ENCODE measurements at regions of chr2 and their contacts with region 1.

Region 1: DNA sequence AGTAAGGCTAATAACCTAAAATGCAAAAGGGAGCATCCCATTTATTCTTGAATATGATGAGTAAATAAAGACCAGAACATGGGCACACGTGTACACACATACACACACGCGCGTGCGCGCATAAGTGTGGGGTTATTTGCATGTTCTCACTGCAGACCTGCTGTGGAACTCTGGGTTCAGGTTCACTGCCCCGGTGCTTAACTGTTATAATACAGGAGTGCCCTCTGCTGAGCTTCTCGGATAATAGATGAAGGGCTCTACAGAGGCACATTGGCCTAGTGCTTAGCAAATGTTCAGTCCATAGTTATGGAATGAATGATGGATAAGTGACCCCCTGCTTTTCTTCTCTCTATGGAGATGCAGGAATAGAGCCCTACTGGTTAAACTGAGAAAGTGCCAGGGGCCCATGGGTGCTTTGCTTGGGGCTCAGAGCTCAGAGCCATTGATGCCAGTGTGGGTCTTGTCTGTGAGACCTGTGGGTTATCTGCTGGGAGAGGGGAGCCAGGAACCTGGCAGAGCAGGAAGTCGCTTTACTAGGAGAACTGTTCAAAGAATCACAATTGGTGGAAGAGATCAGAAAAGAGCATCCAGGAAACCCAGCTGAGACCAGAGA is 3.6 kb upstream of the ARL4C start:
- DNase-seq: peak; percentile 92
- ATAC-seq: peak; percentile 66
- H3K4me3 ChIP-seq: no peak overlapping the region
- H3K4me3 Mint-ChIP-seq: peak overlapping the region; percentile 49
- H3K27ac ChIP-seq: no peak overlapping the region
- H3K27ac Mint-ChIP-seq: peak overlapping the region; percentile 72
- H3K4me1 ChIP-seq: peaks cover 5 to 8% of the 10 kb centered on the region in 2 donors
- H3K4me1 Mint-ChIP-seq: peaks cover 27% of the 10 kb centered on the region
- H3K27me3 ChIP-seq: peaks cover 0 to 14% (median 7%) of the 10 kb centered on the region in 4 experiments
- H3K27me3 Mint-ChIP-seq: peaks cover 28% of the 10 kb centered on the region
- CTCF ChIP-seq: peak; percentile 78

Region 2: DNA sequence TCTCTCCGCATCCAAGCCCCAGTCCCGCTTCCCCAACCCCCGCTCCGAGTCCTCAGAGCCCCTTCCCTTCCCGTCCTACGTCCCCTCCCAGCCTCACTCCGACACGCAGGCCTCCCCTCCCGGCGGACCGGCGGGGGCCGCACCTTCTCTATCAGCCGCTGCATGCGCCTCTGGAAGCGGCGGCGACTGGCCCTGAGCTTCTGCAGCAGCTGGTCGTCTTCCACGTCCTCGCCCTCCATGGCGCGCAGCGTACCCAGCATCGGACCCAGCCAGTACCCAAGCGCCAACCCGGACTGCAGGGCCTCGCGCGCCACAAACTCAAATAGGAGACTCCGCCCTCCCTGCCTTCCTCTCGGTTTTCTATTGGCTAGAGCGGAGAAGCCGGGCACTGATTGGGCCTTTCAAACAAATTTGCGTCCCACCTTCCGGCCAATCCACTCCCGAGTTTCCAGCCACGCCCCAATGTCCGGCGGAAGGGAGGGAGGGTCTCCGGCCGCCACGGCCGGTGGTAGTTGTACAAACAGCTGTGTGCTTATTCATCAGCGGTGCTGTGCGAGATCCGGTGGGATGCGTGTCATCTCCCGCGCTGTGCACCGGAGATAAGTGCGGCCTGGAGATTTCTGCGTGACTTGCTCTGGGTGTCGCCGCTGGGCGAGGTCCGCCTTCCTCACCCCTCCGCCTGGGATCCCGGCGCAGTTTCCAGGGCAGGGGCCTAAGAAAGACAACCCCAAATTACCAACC is 646.1 kb before region 1 on chr2 and contains the start of gene HJURP:
- CTCF ChIA-PET with region 1: no interaction called
- POLR2A ChIA-PET with region 1: no interaction called
- intact Hi-C with region 1: loop called (anchors 1 kb)
- DNase-seq: peak; percentile 92
- ATAC-seq: peak; percentile 98
- H3K4me3 ChIP-seq: peak within 1 kb of the TSS; percentile 60 to 85 (median 72)
- H3K4me3 Mint-ChIP-seq: peak within 1 kb of the TSS; percentile 87
- H3K27ac ChIP-seq: no peak within 1 kb of the TSS
- H3K27ac Mint-ChIP-seq: peak within 1 kb of the TSS; percentile 79
- H3K4me1 ChIP-seq: peaks cover 6 to 19% of the 10 kb centered on the region in 2 donors
- H3K4me1 Mint-ChIP-seq: peaks cover 20% of the 10 kb centered on the region
- H3K27me3 ChIP-seq: no peaks in the 10 kb centered on the region
- H3K27me3 Mint-ChIP-seq: peaks cover 7% of the 10 kb centered on the region
- CTCF ChIP-seq: no peak
- total RNA-seq, gene HJURP: 0.42 and 0.73 TPM in 2 replicates

Region 3: DNA sequence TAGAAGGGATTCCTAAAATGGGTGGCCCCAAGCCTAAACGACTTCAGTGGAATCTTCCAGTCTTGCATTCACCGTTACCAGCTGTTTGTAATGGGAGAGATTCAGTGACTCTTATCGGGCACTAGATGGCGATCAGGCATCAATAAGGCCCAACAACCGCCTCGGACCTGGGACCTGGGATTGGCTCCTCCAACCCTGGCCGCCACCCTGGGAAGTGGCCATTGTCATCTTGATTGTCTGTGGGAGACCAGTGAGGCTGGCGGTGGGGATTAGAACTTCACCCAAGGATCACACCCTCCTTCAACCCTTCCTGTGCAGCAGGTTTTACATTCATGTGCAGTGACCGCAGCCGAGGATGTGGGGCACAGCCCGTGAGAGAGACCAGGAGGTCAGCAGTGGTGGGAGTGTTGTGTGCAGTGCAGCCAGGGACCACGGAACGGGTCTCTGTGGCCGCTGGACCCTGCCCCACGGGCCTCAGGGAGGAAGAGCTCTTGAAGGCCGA is 364.7 kb before region 1 on chr2:
- CTCF ChIA-PET with region 1: interaction called, 217 read pairs
- POLR2A ChIA-PET with region 1: no interaction called
- intact Hi-C with region 1: loop called (anchors 1 kb)
- DNase-seq: peak; percentile 75
- ATAC-seq: peak; percentile 53
- H3K4me3 ChIP-seq: no peak overlapping the region
- H3K4me3 Mint-ChIP-seq: no peak overlapping the region
- H3K27ac ChIP-seq: no peak overlapping the region
- H3K27ac Mint-ChIP-seq: no peak overlapping the region
- H3K4me1 ChIP-seq: peaks cover 4 to 11% of the 10 kb centered on the region in 2 donors
- H3K4me1 Mint-ChIP-seq: peaks cover 15% of the 10 kb centered on the region
- H3K27me3 ChIP-seq: peaks cover 0 to 41% (median 17%) of the 10 kb centered on the region in 4 experiments
- H3K27me3 Mint-ChIP-seq: peaks cover 49% of the 10 kb centered on the region
- CTCF ChIP-seq: peak; percentile 86

Region 4: GRCh38 chr2:234288974-234289455 is 211.5 kb before region 1 on chr2:
- CTCF ChIA-PET with region 1: interaction called, 57 read pairs
- POLR2A ChIA-PET with region 1: interaction called, 3 read pairs
- intact Hi-C with region 1: loop called (anchors 1 kb)
- DNase-seq: peak; percentile 77
- ATAC-seq: no peak
- H3K4me3 ChIP-seq: no peak overlapping the region
- H3K4me3 Mint-ChIP-seq: no peak overlapping the region
- H3K27ac ChIP-seq: no peak overlapping the region
- H3K27ac Mint-ChIP-seq: no peak overlapping the region
- H3K4me1 ChIP-seq: peaks cover 41 to 47% of the 10 kb centered on the region in 2 donors
- H3K4me1 Mint-ChIP-seq: peaks cover 49% of the 10 kb centered on the region
- H3K27me3 ChIP-seq: peaks cover 0 to 58% (median 9%) of the 10 kb centered on the region in 4 experiments
- H3K27me3 Mint-ChIP-seq: peaks cover 26% of the 10 kb centered on the region
- CTCF ChIP-seq: peak; percentile 74

Region 5: DNA sequence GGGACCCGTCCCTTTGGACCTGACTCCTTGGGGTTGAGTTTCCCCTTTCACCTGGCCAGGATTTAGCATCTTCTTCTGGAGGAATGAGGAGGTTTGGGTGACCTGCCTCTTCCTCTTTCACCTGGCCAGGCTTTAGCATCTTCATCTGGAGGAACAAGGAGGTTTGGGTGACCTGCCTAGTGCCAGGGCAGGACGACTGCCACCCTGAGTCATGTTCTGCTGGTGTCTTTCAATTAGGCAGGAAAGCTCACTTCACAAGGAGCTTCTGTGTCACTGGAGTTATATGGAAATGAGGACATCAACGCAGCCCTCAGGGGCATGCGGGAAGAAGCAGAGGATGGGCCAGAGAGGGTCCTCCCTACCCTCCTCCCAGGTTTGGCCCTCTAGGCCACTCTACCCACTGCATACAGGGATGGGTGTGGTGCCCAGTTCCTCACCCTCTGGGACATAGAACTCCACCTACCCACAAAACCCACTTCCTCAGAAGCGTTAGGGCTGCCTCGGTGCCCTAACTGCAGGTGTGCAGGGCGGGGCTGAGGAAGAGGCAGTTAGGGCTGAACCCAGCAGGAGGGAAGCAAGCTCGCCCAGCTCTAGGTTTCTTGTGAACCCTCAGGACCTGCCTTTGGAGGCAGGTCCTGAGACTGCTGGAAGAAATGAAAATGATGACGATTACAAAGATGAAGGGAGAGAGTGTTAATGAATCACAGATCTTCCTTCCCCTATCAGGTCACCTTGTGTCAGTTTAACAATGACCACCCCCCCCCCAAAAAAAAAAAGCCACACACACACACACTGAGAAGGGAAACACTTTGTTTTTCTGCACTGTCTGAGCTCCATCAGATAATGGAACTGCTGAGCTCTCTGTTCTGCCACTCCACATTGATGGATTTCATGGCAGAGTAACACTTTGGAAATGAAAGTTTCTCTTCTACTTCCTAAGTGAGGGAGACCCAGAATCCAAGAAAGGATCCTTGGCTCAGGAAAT is 74.6 kb before region 1 on chr2:
- CTCF ChIA-PET with region 1: interaction called, 8 read pairs
- POLR2A ChIA-PET with region 1: interaction called, 10 read pairs
- intact Hi-C with region 1: loop called (anchors 1 kb)
- DNase-seq: peak; percentile 94
- ATAC-seq: peak; percentile 92
- H3K4me3 ChIP-seq: peak overlapping the region in 2 of 5 experiments; percentile 5 to 37
- H3K4me3 Mint-ChIP-seq: peak overlapping the region; percentile 69
- H3K27ac ChIP-seq: peak overlapping the region; percentile 87
- H3K27ac Mint-ChIP-seq: peak overlapping the region; percentile 95
- H3K4me1 ChIP-seq: peaks cover 79 to 85% of the 10 kb centered on the region in 2 donors
- H3K4me1 Mint-ChIP-seq: peaks cover 73% of the 10 kb centered on the region
- H3K27me3 ChIP-seq: no peaks in the 10 kb centered on the region
- H3K27me3 Mint-ChIP-seq: no peaks in the 10 kb centered on the region
- CTCF ChIP-seq: no peak

Region 6: GRCh38 chr2:234483568-234484251 is 16.8 kb before region 1 on chr2:
- CTCF ChIA-PET with region 1: interaction called, 12 read pairs
- POLR2A ChIA-PET with region 1: interaction called, 17 read pairs
- intact Hi-C with region 1: loop called (anchors 2 kb)
- DNase-seq: peak; percentile 90
- ATAC-seq: peak; percentile 87
- H3K4me3 ChIP-seq: peak overlapping the region in 1 of 5 experiments; percentile 27
- H3K4me3 Mint-ChIP-seq: peak overlapping the region; percentile 61
- H3K27ac ChIP-seq: peak overlapping the region; percentile 48 to 59
- H3K27ac Mint-ChIP-seq: peak overlapping the region; percentile 33
- H3K4me1 ChIP-seq: peaks cover 45 to 50% of the 10 kb centered on the region in 2 donors
- H3K4me1 Mint-ChIP-seq: peaks cover 41% of the 10 kb centered on the region
- H3K27me3 ChIP-seq: peaks cover 0 to 4% (median 0%) of the 10 kb centered on the region in 4 experiments
- H3K27me3 Mint-ChIP-seq: no peaks in the 10 kb centered on the region
- CTCF ChIP-seq: peak; percentile 71